ENCODE measurements at regions of chr12 and their contacts with region 1.

Region 1: DNA sequence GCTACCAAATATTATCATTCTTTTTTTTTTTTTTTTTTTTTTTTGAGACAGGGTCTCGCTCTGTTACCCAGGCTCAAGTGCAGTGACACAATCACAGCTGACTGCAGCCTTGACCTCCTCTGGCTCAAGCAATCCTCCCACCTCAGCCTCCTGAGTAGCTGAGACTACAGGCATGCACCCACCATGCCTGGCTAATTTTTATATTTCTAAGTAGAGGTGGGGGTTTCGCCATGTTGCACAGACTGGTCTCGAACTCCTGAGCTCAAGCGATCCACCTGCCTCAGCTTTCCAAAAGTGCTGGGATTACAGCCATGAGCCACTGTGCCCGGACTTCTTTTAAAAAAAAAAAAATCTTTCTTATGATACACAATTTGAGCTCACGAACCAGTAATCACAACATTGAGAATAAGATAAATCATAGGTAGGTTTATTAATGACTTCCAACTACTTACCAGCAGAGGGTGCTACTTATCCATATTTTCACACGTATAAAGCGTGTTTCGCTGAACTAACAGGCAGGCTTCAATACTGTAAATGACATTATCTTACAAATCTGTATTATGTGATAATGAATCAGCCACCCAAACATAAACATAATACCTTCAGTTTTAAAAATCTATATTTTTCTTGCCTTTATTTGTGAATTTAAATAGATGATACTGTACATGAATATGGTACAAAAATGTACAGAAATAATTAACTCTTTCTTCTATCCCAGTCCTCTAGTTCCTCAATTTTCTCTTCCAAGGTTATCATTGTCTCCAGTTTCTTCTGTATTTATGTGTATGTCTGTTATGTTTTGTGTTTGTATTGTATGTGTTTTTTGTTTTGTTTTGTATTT is 42.5 kb upstream of the BCAT1 start:
- DNase-seq: peak; percentile 75
- ATAC-seq: peak; percentile 88
- H3K4me3 ChIP-seq: no peak overlapping the region
- H3K27ac ChIP-seq: no peak overlapping the region
- H3K4me1 ChIP-seq: no peaks in the 10 kb centered on the region
- H3K27me3 ChIP-seq: peaks cover 2% of the 10 kb centered on the region
- CTCF ChIP-seq: peak; percentile 72
- POLR2A ChIP-seq: no peak
- RAD21 ChIP-seq: peak; percentile 84

Region 2: DNA sequence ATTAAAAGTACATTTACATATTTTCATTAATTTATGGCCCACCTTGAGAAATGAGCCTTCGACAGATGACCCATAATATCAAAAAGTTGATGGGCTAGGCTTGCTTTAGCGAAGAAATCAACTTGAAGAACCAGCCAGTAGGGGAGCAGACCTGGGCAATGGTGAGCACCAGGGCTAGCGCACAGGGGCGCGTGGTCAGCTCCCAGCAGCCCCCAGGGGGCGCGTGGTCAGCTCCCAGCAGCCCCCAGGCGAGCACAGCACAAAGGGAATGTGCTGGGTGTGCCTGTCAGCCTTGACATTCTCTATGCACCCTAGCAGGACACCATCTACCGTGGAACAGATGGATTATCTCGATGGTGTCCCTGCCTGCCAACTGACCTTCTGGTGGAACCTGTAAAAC is 1026.6 kb before region 1 on chr12:
- CTCF ChIA-PET with region 1: no interaction called
- POLR2A ChIA-PET with region 1: no interaction called
- dilution Hi-C with region 1: no loop called
- in situ Hi-C with region 1: no loop called
- intact Hi-C with region 1: no loop called
- DNase-seq: no peak
- ATAC-seq: no peak
- H3K4me3 ChIP-seq: no peak overlapping the region
- H3K27ac ChIP-seq: no peak overlapping the region
- H3K4me1 ChIP-seq: no peaks in the 10 kb centered on the region
- H3K27me3 ChIP-seq: no peaks in the 10 kb centered on the region
- CTCF ChIP-seq: no peak
- POLR2A ChIP-seq: no peak
- RAD21 ChIP-seq: no peak

Region 3: DNA sequence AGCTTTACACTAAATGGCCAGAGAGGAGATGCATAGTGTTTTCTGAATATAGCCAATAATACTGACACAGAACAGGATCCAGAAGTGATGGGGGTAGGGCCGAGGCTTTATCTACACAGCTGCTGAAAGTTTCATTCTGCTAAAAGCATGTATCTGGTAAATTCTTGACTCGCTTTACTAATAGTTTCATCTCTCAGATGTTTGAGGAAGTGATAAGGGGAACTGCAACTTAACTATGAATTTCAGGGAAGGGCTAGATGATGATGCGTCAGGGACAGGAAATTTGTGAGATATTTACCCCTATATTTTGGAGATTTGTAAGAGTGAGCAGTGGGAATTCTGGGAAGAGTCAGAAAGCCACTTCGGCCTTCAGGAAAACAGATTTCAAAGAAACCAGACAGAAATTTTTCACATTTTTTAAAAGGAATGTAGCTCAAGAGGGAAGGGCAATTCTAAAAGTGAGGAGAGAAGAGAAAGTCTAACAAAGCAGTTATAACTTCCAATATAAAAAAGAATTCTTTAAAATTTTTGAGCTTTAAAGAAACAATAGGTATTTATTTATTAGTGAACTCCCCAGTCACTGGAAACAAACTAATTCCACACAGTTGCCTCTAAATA is 285.6 kb before region 1 on chr12:
- CTCF ChIA-PET with region 1: no interaction called
- POLR2A ChIA-PET with region 1: no interaction called
- dilution Hi-C with region 1: no loop called
- in situ Hi-C with region 1: no loop called
- intact Hi-C with region 1: no loop called
- DNase-seq: peak; percentile 29
- ATAC-seq: peak; percentile 72
- H3K4me3 ChIP-seq: no peak overlapping the region
- H3K27ac ChIP-seq: no peak overlapping the region
- H3K4me1 ChIP-seq: no peaks in the 10 kb centered on the region; the same call in 1 of the 2 replicates
- H3K27me3 ChIP-seq: no peaks in the 10 kb centered on the region
- CTCF ChIP-seq: no peak
- POLR2A ChIP-seq: no peak
- RAD21 ChIP-seq: no peak

Region 4: DNA sequence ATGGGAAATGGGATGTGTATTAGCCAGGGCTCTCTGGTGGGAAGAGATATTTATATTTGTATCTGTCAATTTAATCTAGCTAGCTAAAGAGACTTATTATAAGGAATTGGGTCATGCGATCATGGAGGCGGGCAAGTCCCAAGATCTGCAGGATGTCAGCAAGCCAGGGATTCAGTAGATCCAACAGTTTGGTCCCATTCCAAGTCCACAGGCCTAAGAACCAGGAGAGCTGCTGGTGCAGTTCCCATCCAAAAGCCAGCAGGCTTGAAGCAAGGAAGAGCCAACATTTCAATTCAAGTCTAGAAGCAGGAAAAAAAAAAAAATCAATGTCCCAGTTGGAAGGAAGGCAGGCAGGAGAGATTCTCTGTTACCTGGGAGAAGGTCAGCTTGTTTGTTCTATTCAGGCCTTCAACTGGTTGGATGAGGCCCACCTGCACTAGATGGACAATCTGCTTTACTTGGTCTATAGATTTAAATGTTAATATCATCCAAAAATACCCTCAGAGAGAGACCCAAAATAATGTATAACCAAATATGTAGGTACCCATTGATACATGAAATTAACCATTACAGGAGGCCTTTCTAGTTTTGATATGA is 18.2 kb after region 1 on chr12:
- CTCF ChIA-PET with region 1: no interaction called
- POLR2A ChIA-PET with region 1: no interaction called
- dilution Hi-C with region 1: no loop called
- in situ Hi-C with region 1: no loop called
- intact Hi-C with region 1: no loop called
- DNase-seq: no peak
- ATAC-seq: no peak
- H3K4me3 ChIP-seq: no peak overlapping the region
- H3K27ac ChIP-seq: no peak overlapping the region
- H3K4me1 ChIP-seq: no peaks in the 10 kb centered on the region
- H3K27me3 ChIP-seq: no peaks in the 10 kb centered on the region
- CTCF ChIP-seq: no peak
- POLR2A ChIP-seq: no peak
- RAD21 ChIP-seq: no peak

Region 5: DNA sequence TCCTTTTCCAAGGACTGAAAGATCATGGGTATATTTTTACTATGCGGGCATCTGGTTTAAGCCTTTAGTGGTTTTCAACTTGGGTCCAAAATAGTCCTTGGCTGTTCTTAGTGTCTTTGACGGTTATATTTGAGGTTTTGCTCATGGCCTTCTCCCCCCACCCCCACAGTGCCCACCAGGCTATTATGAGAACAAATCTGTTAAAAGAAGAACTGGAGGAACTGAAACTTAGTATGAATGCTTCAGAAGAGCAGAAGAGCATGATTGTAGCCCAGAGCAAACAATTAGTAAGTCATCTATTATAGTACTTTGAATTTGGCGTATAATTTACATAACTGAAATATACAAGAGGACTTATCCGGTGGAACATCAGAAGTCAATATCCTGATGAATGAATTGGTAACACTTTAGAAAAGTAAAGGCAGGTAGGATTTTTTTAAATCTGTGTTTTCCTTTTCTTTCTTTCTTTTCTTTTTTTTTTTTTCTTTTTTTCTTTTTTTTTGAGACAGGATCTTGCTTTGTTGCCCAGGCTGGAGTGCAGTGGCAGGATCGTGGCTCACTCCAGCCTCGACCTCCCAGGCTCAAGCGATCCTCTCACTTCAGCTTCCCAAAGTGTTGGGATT is 29.3 kb after region 1 on chr12:
- CTCF ChIA-PET with region 1: no interaction called
- POLR2A ChIA-PET with region 1: no interaction called
- dilution Hi-C with region 1: no loop called
- in situ Hi-C with region 1: no loop called
- intact Hi-C with region 1: no loop called
- DNase-seq: no peak
- ATAC-seq: no peak
- H3K4me3 ChIP-seq: no peak overlapping the region
- H3K27ac ChIP-seq: no peak overlapping the region
- H3K4me1 ChIP-seq: no peaks in the 10 kb centered on the region
- H3K27me3 ChIP-seq: no peaks in the 10 kb centered on the region
- CTCF ChIP-seq: no peak
- POLR2A ChIP-seq: no peak
- RAD21 ChIP-seq: no peak

Region 6: GRCh38 chr12:25130741-25131188 is 139.3 kb after region 1 on chr12:
- CTCF ChIA-PET with region 1: interaction called, 4 read pairs
- POLR2A ChIA-PET with region 1: no interaction called
- dilution Hi-C with region 1: no loop called
- in situ Hi-C with region 1: loop called (anchors 5 kb)
- intact Hi-C with region 1: loop called (anchors 1 kb)
- DNase-seq: peak; percentile 67
- ATAC-seq: peak; percentile 54
- H3K4me3 ChIP-seq: no peak overlapping the region
- H3K27ac ChIP-seq: no peak overlapping the region
- H3K4me1 ChIP-seq: peaks cover 2% of the 10 kb centered on the region
- H3K27me3 ChIP-seq: no peaks in the 10 kb centered on the region
- CTCF ChIP-seq: peak; percentile 75
- POLR2A ChIP-seq: no peak
- RAD21 ChIP-seq: peak; percentile 68

Region 7: GRCh38 chr12:25151476-25151875 is 160.0 kb after region 1 on chr12:
- CTCF ChIA-PET with region 1: interaction called, 7 read pairs
- POLR2A ChIA-PET with region 1: no interaction called
- dilution Hi-C with region 1: no loop called
- in situ Hi-C with region 1: no loop called
- intact Hi-C with region 1: loop called (anchors 1 kb)
- DNase-seq: peak; percentile 100
- ATAC-seq: peak; percentile 98
- H3K4me3 ChIP-seq: no peak overlapping the region
- H3K27ac ChIP-seq: peak overlapping the region; percentile 92
- H3K4me1 ChIP-seq: peaks cover 16% of the 10 kb centered on the region
- H3K27me3 ChIP-seq: no peaks in the 10 kb centered on the region
- CTCF ChIP-seq: no peak
- POLR2A ChIP-seq: no peak
- RAD21 ChIP-seq: peak; percentile 15

Region 8: DNA sequence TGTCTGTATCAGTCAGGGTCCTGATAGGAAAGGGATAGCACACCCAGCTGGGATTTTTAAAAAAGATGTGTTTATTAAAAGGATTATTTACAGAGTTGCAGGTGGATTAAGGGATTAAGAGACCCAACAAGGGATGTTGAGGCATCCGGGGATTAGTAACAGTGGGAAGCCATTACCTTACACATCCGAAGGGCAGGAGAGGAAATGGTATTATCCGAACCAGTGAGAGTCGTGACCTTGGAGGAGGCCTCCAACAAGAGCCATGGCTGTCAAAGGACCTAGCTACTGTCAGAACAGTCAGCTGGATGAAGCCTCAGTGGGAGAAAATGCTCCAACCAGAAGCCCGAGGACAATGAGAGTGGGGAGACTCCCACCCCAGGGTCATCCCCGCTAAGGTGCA is 405.6 kb after region 1 on chr12:
- CTCF ChIA-PET with region 1: no interaction called
- POLR2A ChIA-PET with region 1: no interaction called
- dilution Hi-C with region 1: no loop called
- in situ Hi-C with region 1: loop called (anchors 10 kb)
- intact Hi-C with region 1: no loop called
- DNase-seq: no peak
- ATAC-seq: no peak
- H3K4me3 ChIP-seq: no peak overlapping the region
- H3K27ac ChIP-seq: no peak overlapping the region
- H3K4me1 ChIP-seq: no peaks in the 10 kb centered on the region
- H3K27me3 ChIP-seq: no peaks in the 10 kb centered on the region
- CTCF ChIP-seq: no peak
- POLR2A ChIP-seq: no peak
- RAD21 ChIP-seq: no peak

Region 9: GRCh38 chr12:26028953-26029735 is 1037.7 kb after region 1 on chr12:
- CTCF ChIA-PET with region 1: no interaction called
- POLR2A ChIA-PET with region 1: no interaction called
- dilution Hi-C with region 1: no loop called
- in situ Hi-C with region 1: loop called (anchors 25 kb)
- intact Hi-C with region 1: no loop called
- DNase-seq: peak; percentile 67
- ATAC-seq: peak; percentile 75
- H3K4me3 ChIP-seq: no peak overlapping the region
- H3K27ac ChIP-seq: no peak overlapping the region
- H3K4me1 ChIP-seq: peaks cover 9% of the 10 kb centered on the region
- H3K27me3 ChIP-seq: no peaks in the 10 kb centered on the region
- CTCF ChIP-seq: peak; percentile 84
- POLR2A ChIP-seq: no peak
- RAD21 ChIP-seq: peak; percentile 82

Measured in IMR-90 (cell line).